Esophagus squamous epithelium (tissue), 5 donors: ENCODE measurements at regions of chrX and their contacts with region 1.

Region 1: DNA sequence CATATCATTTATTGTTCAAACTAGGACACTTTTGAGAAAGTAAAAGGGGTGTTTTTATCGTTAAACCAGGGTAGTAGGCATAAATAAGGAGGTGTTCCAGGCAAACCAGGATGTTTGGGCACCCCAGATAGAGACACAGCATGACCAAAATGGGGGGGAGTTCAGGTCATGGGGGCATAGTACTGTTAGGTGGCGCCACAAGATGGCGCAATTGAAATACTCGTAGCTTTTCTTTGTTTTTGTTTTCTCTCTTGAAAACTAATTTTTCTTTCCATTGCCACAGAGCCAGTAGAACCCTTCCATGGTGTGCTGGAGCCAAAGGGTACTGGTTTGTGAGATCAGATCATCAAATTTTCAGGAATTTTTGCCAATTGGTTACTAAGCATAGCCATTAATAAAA is 283.4 kb downstream of the BCOR start:
- DNase-seq: no peak
- H3K4me3 ChIP-seq: no peak overlapping the region
- H3K27ac ChIP-seq: peak overlapping the region in 2 of 4 donors; percentile 33 to 47
- H3K4me1 ChIP-seq: peaks cover 0 to 9% (median 0%) of the 10 kb centered on the region in 3 donors
- H3K27me3 ChIP-seq: no peaks in the 10 kb centered on the region
- CTCF ChIP-seq: peak in 5 of 6 experiments; percentile 13 to 52 (median 38)
- POLR2A ChIP-seq: no peak

Region 2: DNA sequence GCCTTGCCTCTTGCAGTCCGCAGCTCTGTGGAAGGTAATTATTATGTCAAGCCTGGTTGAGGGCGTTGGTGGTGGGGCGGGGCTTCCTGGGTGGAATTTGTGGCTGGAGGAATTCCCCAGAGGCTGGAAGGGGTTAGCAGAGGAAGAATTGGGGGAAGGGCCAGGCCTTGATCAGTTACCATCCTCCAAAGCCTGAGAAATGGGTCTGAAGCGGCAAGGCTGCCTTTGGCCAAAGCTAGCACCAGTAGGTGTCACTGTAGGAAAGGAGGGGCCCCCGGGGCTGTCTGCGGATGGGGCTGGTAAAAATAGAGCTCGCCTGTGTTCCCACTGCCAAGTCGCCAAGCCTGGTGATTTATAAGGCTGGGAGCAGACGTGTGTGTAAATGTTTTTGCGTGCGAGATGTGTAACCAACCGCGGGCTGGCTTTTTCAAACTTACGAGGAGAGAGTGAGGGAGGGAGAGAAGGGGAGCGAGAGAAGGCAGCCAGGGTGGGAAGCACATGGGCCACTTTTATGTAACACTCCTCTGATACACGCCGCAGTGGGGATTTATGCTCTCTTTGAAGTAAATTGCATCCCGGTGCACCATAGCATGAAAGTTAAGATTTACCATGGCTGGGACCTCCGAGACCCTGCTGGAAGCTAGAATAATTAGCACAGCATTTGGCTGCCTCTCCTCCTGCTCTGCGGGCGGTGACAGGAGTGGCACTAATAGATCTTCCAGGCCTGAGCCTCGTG is 83.6 kb before region 1 on chrX:
- intact Hi-C with region 1: no loop called
- DNase-seq: no peak
- H3K4me3 ChIP-seq: no peak overlapping the region
- H3K27ac ChIP-seq: no peak overlapping the region
- H3K4me1 ChIP-seq: peaks cover 0 to 39% (median 12%) of the 10 kb centered on the region in 3 donors
- H3K27me3 ChIP-seq: no peaks in the 10 kb centered on the region
- CTCF ChIP-seq: peak; percentile 31 to 61 (median 44)
- POLR2A ChIP-seq: no peak

Region 3: DNA sequence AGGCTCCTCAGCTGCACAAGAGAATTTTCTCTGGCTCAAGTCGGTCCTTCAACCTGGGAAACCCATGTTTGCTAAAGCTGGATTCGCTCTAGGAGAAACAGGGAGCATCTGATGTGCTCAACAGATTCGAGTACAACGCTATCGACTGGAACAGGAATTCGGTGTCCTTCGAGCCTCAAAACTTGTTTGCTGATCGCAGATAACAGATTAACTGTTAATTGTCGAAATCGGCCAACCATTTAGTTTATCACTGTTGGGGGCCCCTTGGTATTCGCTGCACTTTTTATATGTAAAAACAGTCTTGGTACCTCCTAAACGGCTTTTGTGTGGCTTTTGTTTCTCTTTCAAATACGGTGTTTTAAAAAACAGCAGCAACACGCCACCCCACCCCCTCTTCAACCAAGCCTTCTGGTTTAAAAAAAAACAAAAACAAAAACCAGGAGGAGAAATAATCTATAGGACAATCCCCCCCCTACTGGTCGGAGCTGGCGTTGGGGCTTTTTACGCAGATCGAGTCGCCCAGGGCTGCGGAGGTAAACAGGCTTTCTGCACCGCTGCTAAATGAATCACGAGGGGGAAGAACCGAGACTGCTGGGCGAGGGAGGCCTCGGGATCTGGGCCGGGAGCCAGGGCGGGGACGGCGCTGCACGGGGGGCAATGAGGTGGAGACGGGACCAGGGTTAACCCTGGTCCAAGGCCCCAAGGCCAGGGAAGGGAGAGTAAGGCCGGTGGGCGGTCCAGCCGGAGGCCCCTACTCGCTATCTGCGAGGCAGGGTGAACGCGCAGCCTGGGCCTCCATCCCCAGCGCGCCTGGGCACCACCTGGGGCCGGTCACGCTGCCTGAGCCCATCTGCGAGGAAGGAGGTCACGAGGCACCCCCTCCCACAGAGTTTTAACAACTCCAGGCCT is 355.1 kb after region 1 on chrX:
- intact Hi-C with region 1: loop called (anchors 10 kb)
- DNase-seq: peak; percentile 20
- H3K4me3 ChIP-seq: peak overlapping the region in 2 of 4 donors; percentile 11 to 19
- H3K27ac ChIP-seq: peak overlapping the region in 3 of 4 donors; percentile 36 to 93 (median 49)
- H3K4me1 ChIP-seq: peaks cover 15 to 75% (median 21%) of the 10 kb centered on the region in 3 donors
- H3K27me3 ChIP-seq: peaks cover 0 to 10% (median 0%) of the 10 kb centered on the region in 4 donors
- CTCF ChIP-seq: peak in 5 of 6 experiments; percentile 40 to 59 (median 50)
- POLR2A ChIP-seq: no peak